Heart right ventricle (tissue), 16 donors: ENCODE measurements at regions of chr11 and their contacts with region 1.

Region 1: GRCh38 chr11:119323538-119324033 is 6.7 kb upstream of the MCAM start:
- DNase-seq: peak in 1 of 2 donors; percentile 83
- ATAC-seq: no peak
- H3K4me3 ChIP-seq: no peak overlapping the region
- H3K27ac ChIP-seq: peak overlapping the region in 5 of 10 donors; percentile 6 to 99 (median 92)
- H3K4me1 ChIP-seq: peaks cover 4 to 55% (median 34%) of the 10 kb centered on the region in 9 donors
- H3K27me3 ChIP-seq: peaks cover 0 to 27% (median 0%) of the 10 kb centered on the region in 7 donors
- CTCF ChIP-seq: peak; percentile 68 to 87 (median 84)

Region 2: DNA sequence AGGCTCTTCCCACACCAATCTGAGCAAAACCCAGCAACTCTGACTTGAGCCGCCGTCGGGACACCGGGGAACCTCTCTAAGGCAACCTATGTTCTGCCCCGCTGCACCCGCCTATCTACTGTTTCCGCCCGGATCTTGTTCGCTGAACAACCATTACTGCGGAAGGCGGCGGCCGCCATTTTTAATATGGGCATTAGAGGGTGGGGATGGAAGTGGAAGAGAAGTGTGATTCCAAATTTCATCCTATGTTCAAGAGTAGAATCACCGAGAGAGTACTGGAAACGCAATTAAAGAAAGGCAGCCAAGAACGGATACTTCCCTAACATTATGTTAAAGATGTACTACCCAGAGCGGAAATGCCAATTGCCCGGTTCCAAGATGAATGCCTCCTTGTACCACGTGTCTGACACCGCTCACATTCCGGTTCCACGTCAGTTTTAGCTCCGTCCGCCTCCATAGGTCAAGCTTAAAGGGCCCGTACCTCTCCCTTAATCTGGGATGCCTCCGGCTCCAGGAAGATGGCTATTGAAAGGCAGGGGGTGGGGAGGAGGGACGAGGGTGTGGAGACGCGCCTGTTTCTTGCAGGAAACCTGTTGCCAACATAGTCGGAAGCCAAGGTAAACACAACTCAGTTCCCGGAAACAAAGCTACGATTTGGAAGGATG is 221.7 kb before region 1 on chr11 and contains the start of gene DPAGT1:
- intact Hi-C with region 1: loop called in 2 of 10 experiments (anchors 5 to 10 kb)
- DNase-seq: peak; percentile 81 to 95
- ATAC-seq: peak; percentile 94 to 97 (median 96)
- H3K4me3 ChIP-seq: peak within 1 kb of the TSS; percentile 69 to 89 (median 79)
- H3K27ac ChIP-seq: peak within 1 kb of the TSS; percentile 83 to 96 (median 92)
- H3K4me1 ChIP-seq: peaks cover 10 to 50% (median 35%) of the 10 kb centered on the region in 9 donors
- H3K27me3 ChIP-seq: no peaks in the 10 kb centered on the region
- CTCF ChIP-seq: no peak
- total RNA-seq, gene DPAGT1: 8.6 to 23.2 (median 16.5) TPM

Region 3: DNA sequence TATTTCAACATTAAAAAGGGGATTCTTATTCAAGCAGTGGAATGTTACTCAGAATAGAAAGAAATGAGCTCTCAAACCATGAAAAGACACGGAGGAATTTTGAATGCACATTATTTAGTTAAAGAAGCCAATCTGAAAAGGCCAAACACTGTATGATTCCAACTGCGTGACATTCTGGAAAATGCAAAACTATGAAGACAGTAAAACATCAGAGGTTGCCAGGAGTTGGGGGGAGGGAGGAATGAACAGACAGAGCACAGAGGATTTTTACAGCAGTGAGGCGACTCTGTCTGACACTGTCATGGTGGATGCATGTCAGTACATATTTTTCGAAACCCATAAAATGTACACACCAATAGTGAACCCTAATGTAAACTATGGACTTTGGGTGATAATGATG is 122.3 kb after region 1 on chr11:
- intact Hi-C with region 1: no loop called
- DNase-seq: no peak
- ATAC-seq: no peak
- H3K4me3 ChIP-seq: no peak overlapping the region
- H3K27ac ChIP-seq: no peak overlapping the region
- H3K4me1 ChIP-seq: peaks cover 0 to 10% (median 0%) of the 10 kb centered on the region in 9 donors
- H3K27me3 ChIP-seq: peaks cover 0 to 7% (median 0%) of the 10 kb centered on the region in 7 donors
- CTCF ChIP-seq: no peak

Region 4: GRCh38 chr11:119533921-119534736 is 210.5 kb after region 1 on chr11:
- intact Hi-C with region 1: no loop called
- DNase-seq: peak; percentile 47 to 76
- ATAC-seq: peak; percentile 72 to 88 (median 78)
- H3K4me3 ChIP-seq: no peak overlapping the region
- H3K27ac ChIP-seq: no peak overlapping the region
- H3K4me1 ChIP-seq: peaks cover 0 to 10% (median 0%) of the 10 kb centered on the region in 9 donors
- H3K27me3 ChIP-seq: peaks cover 0 to 43% (median 10%) of the 10 kb centered on the region in 7 donors
- CTCF ChIP-seq: peak; percentile 50 to 90 (median 84)